ENCODE measurements at regions of chr1 and their contacts with region 1.

Region 1: DNA sequence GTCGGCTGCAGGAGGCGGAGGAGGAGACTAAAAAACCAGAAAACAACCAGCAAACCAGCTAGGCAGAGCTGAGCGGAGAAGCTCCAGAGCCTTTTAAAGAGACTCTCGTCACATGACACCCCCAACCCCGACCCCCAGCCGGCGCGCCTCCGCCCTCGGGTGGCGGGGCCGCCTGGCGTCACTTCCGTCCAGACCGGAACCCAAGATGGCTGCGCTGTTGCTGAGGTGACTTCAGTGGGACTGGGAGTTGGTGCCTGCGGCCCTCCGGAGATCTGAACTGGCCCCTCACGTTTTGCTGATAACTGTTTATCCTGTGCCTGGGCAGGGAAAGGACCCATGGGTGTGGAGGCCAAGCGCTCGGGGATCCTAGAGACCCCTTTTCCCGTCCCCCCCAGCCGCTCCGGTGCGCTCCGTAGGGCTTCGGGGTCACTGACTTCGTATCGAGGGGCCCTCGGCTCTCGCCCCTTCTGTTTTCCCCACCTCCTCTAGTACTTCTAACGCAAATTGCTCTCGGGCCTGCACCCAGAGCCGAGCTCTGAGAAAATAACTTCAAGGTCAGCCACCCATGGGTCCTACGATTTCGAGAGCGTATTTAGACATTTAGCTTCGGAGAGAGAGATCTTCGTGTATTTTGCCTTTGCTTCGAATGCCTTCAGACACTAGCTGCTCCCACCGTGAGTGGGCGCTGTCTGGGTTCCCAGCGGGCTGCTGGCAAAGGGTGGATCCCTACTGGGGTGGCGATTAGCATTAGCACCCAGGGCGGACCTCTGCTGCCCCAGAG is at the start of gene SDHC:
- DNase-seq: peak; percentile 95
- H3K4me3 ChIP-seq: peak within 1 kb of the TSS; percentile 80 to 91 (median 86)
- H3K27ac ChIP-seq: peak within 1 kb of the TSS; percentile 92 to 97 (median 93)
- H3K4me1 ChIP-seq: peaks cover 0 to 18% (median 16%) of the 10 kb centered on the region in 4 donors
- H3K27me3 ChIP-seq: no peaks in the 10 kb centered on the region
- CTCF ChIP-seq: peak in 1 of 4 experiments; percentile 19
- EP300 ChIP-seq: peak in 1 of 4 donors; percentile 29
- POLR2A ChIP-seq: peak; percentile 82 to 87
- total RNA-seq, gene SDHC: 21.2 to 83.5 (median 38.1) TPM

Region 2: GRCh38 chr1:161382214-161383019 is 68.0 kb after region 1 on chr1:
- intact Hi-C with region 1: loop called (anchors 5 kb)
- DNase-seq: no peak
- H3K4me3 ChIP-seq: no peak overlapping the region
- H3K27ac ChIP-seq: peak overlapping the region; percentile 48 to 81 (median 65)
- H3K4me1 ChIP-seq: peaks cover 0 to 16% (median 9%) of the 10 kb centered on the region in 4 donors
- H3K27me3 ChIP-seq: no peaks in the 10 kb centered on the region
- CTCF ChIP-seq: peak; percentile 62 to 73 (median 66)
- EP300 ChIP-seq: peak in 1 of 4 donors; percentile 16
- POLR2A ChIP-seq: no peak

Region 3: GRCh38 chr1:161549652-161550051 is 235.3 kb after region 1 on chr1 and contains the start of gene FCGR3A:
- intact Hi-C with region 1: no loop called
- DNase-seq: no peak
- H3K4me3 ChIP-seq: no peak within 1 kb of the TSS
- H3K27ac ChIP-seq: peak within 1 kb of the TSS in 2 of 4 donors; percentile 12 to 29
- H3K4me1 ChIP-seq: no peaks in the 10 kb centered on the region
- H3K27me3 ChIP-seq: peaks cover 0 to 9% (median 0%) of the 10 kb centered on the region in 3 donors
- CTCF ChIP-seq: no peak
- EP300 ChIP-seq: no peak
- POLR2A ChIP-seq: no peak
- total RNA-seq, gene FCGR3A: 7.8 to 19.3 (median 14.6) TPM

Region 4: DNA sequence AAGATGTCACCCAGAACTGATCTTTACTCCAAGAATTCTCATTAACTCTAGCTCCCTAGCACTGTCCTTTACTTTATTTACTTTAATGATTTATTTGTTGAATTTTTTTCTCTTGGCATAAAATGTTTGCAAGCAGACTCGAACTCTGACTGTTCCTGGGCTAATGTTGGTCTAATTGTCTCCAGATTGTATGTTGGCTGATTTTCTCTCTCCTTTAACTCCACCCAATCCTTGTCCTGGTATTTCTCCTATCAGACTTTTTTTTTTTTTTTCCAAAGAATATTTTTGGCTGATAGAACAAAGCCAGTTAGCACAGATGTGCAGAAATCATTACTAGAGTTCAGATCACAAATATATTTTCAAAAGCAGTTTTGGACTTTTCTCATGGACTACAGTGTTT is 534.3 kb after region 1 on chr1:
- intact Hi-C with region 1: no loop called
- DNase-seq: no peak
- H3K4me3 ChIP-seq: no peak overlapping the region
- H3K27ac ChIP-seq: no peak overlapping the region
- H3K4me1 ChIP-seq: peaks cover 0 to 11% (median 7%) of the 10 kb centered on the region in 4 donors
- H3K27me3 ChIP-seq: no peaks in the 10 kb centered on the region
- CTCF ChIP-seq: no peak
- EP300 ChIP-seq: no peak
- POLR2A ChIP-seq: no peak

Measured in sigmoid colon (tissue), 7 donors.